ENCODE measurements at regions of chr9 and their contacts with region 1.

Region 1: GRCh38 chr9:99299211-99300102 is 77.4 kb downstream of the SEC61B start:
- DNase-seq: peak; percentile 38
- H3K4me3 ChIP-seq: no peak overlapping the region
- H3K27ac ChIP-seq: no peak overlapping the region
- H3K4me1 ChIP-seq: peaks cover 3% of the 10 kb centered on the region
- H3K27me3 ChIP-seq: peaks cover 0 to 3% of the 10 kb centered on the region in 2 experiments
- CTCF ChIP-seq: no peak
- POLR2A ChIP-seq: no peak

Region 2: DNA sequence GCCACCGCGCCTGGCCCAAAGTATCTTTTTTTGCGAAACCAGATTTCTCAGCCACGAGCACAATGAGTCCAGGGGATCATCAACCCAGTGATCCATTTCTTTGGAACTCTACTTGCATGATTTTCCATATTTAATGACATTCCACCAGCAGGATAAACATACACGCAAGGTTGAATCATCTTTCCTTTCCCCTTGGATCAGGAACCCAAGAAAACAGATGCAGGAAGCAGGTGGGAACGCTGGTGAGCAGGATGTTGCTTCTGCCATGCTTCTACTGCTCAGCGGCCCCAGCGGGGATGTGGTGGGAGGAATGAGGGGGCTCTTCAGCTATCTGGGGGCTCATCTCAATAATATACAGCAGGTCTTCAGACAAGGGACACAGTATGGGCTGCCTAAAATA is 40.8 kb after region 1 on chr9:
- CTCF ChIA-PET with region 1: interaction called, 8 read pairs
- POLR2A ChIA-PET with region 1: no interaction called
- dilution Hi-C with region 1: no loop called
- intact Hi-C with region 1: loop called (anchors 2 kb)
- DNase-seq: peak; percentile 83
- H3K4me3 ChIP-seq: no peak overlapping the region
- H3K27ac ChIP-seq: peak overlapping the region; percentile 93
- H3K4me1 ChIP-seq: peaks cover 27% of the 10 kb centered on the region
- H3K27me3 ChIP-seq: no peaks in the 10 kb centered on the region
- CTCF ChIP-seq: no peak
- POLR2A ChIP-seq: peak; percentile 40

Region 3: GRCh38 chr9:99377790-99378775 is 78.6 kb after region 1 on chr9:
- CTCF ChIA-PET with region 1: no interaction called
- POLR2A ChIA-PET with region 1: no interaction called
- dilution Hi-C with region 1: no loop called
- intact Hi-C with region 1: no loop called
- DNase-seq: no peak
- H3K4me3 ChIP-seq: no peak overlapping the region
- H3K27ac ChIP-seq: no peak overlapping the region
- H3K4me1 ChIP-seq: peaks cover 4% of the 10 kb centered on the region
- H3K27me3 ChIP-seq: peaks cover 0 to 4% of the 10 kb centered on the region in 2 experiments
- CTCF ChIP-seq: no peak
- POLR2A ChIP-seq: no peak

Region 4: DNA sequence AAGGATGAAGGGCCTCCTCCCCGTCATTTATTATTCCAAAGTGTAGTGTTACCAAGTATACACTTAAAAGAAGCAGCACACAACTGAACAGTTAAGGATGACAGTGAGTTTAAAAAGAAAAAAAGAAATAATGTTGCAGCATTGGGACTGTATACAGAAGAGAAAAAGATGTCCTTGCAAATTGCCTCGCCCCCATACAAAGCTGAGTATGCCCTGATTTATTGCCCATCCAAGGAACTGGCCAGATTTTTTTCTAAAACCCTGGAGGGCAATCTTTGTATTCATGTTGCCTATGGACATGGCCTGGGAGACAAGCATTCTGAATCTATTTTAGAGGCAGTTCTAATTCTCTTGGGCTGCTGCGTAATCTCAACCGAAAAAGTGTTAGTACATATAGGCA is 339.5 kb after region 1 on chr9:
- CTCF ChIA-PET with region 1: no interaction called
- POLR2A ChIA-PET with region 1: no interaction called
- dilution Hi-C with region 1: no loop called
- intact Hi-C with region 1: no loop called
- DNase-seq: no peak
- H3K4me3 ChIP-seq: no peak overlapping the region
- H3K27ac ChIP-seq: no peak overlapping the region
- H3K4me1 ChIP-seq: no peaks in the 10 kb centered on the region
- H3K27me3 ChIP-seq: no peaks in the 10 kb centered on the region
- CTCF ChIP-seq: no peak
- POLR2A ChIP-seq: no peak

Region 5: DNA sequence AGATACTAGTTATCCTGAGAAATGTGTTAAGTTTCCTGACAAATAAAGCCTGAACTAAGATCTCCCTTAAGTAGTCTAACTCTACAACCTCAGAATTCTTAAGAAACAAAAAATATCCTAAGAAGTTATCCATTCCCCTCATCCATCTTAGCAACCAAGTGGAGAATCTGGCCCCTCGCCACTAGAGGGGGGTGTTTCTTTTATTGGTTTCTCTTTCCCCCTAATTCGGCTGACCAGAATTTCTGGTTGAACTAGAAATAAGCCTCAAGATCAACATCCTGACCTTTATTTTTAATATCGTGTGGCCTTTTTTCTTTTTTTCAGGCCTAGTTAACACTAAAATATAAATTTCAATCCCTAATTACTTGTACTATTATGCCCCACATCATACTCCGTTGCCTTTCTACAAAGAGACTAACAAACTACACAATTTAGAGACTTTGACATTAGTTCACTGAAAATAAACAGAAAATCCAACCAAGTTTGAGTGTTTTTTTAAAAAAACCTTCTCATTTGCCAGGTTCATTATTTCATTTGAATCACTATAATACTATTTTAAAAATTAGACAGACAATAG is 507.9 kb after region 1 on chr9:
- CTCF ChIA-PET with region 1: interaction called, 6 read pairs
- POLR2A ChIA-PET with region 1: no interaction called
- dilution Hi-C with region 1: no loop called
- intact Hi-C with region 1: loop called (anchors 1 kb)
- DNase-seq: peak; percentile 61
- H3K4me3 ChIP-seq: no peak overlapping the region
- H3K27ac ChIP-seq: no peak overlapping the region
- H3K4me1 ChIP-seq: no peaks in the 10 kb centered on the region
- H3K27me3 ChIP-seq: no peaks in the 10 kb centered on the region
- CTCF ChIP-seq: peak; percentile 70 to 72
- POLR2A ChIP-seq: no peak